ENCODE measurements at regions of chr13 and their contacts with region 1.

Region 1: DNA sequence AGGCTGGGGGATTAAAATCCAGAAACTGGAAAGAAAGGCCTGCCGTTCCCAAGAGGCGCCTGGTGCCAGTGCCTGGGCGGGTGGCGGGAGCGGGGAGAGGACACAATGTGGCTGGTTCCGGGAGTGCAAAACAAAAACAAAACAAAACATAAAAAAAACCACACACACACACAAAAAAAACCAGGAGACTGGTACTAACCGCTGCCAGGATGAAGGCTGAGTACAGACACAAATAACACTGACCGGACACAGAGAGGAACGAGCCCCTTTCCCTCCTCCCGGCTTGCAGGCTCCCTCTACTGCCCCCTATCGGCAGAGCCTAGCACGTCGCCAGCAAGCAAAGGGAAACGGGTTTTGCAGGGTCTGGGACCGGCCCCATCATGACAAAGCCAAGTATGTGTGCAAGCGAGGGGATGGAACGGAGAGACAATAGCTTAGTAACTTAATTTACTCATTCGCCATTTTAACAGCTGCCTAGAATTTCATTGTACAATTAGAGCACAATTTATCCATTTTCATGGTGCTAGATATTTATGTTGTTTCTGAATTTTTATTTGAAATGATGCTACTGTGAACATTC is 17.9 kb upstream of the ZDHHC20 start:
- DNase-seq: peak; percentile 55 to 87 (median 80)
- ATAC-seq: peak; percentile 87
- H3K4me3 ChIP-seq: peak overlapping the region; percentile 24 to 40
- H3K4me3 Mint-ChIP-seq: peak overlapping the region; percentile 81
- H3K27ac ChIP-seq: no peak overlapping the region
- H3K27ac Mint-ChIP-seq: no peak overlapping the region
- H3K4me1 ChIP-seq: peaks cover 11% of the 10 kb centered on the region
- H3K4me1 Mint-ChIP-seq: peaks cover 19% of the 10 kb centered on the region
- H3K27me3 ChIP-seq: no peaks in the 10 kb centered on the region
- H3K27me3 Mint-ChIP-seq: peaks cover 2% of the 10 kb centered on the region
- CTCF ChIP-seq: peak; percentile 96

Region 2: GRCh38 chr13:20940083-20940880 is 536.7 kb before region 1 on chr13:
- CTCF ChIA-PET with region 1: interaction called, 9 read pairs
- POLR2A ChIA-PET with region 1: no interaction called
- intact Hi-C with region 1: loop called in 1 of 2 experiments (anchors 1 kb)
- DNase-seq: no peak
- ATAC-seq: no peak
- H3K4me3 ChIP-seq: no peak overlapping the region
- H3K4me3 Mint-ChIP-seq: no peak overlapping the region
- H3K27ac ChIP-seq: no peak overlapping the region
- H3K27ac Mint-ChIP-seq: no peak overlapping the region
- H3K4me1 ChIP-seq: no peaks in the 10 kb centered on the region
- H3K4me1 Mint-ChIP-seq: no peaks in the 10 kb centered on the region
- H3K27me3 ChIP-seq: peaks cover 0 to 4% of the 10 kb centered on the region in 2 experiments
- H3K27me3 Mint-ChIP-seq: peaks cover 22% of the 10 kb centered on the region
- CTCF ChIP-seq: no peak

Region 3: DNA sequence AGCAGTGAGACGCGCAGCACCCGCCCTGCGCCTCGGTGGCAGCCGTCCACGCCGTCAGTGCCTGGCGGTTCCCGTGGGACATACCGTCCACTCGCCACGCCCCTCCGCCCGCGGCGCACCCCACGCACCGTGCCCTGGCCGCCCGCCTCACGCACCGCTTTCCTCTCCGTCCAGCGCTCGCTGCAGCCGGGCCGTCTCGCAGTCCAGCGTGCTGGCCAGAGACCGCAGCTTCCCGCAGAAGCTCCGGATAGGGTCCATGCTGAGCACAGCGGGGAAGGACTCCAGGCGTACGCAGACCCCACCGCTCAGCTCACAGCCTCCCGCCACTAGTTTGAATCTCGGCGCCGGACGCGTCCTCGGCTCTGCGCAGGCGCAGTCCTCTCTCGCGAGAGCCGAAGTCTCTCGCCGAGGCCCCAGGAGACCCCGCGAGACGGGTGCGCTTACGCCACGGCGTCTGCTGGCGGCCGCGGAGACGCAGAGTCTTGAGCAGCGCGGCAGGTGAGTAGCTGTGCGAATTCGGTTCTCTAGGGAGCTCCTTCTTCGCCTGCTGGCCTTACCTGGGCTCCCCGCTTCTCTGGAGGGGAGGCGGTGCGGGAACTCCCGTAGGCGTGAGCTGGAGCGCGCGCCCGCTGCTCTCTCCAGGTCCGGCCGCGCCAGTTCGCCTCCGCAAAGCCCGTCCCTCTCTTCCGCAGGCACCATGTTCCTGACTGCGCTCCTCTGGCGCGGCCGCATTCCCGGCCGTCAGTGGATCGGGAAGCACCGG is 300.6 kb before region 1 on chr13 and contains the starts of genes MRPL57 and SKA3:
- CTCF ChIA-PET with region 1: interaction called, 15 read pairs
- POLR2A ChIA-PET with region 1: no interaction called
- intact Hi-C with region 1: loop called (anchors 5 kb)
- DNase-seq: peak; percentile 86 to 97 (median 93)
- ATAC-seq: peak; percentile 97
- H3K4me3 ChIP-seq: peak within 1 kb of the TSS; percentile 83 to 93
- H3K4me3 Mint-ChIP-seq: peak within 1 kb of the TSS; percentile 97
- H3K27ac ChIP-seq: peak within 1 kb of the TSS; percentile 80 to 92
- H3K27ac Mint-ChIP-seq: peak within 1 kb of the TSS; percentile 96
- H3K4me1 ChIP-seq: peaks cover 18% of the 10 kb centered on the region
- H3K4me1 Mint-ChIP-seq: peaks cover 26% of the 10 kb centered on the region
- H3K27me3 ChIP-seq: no peaks in the 10 kb centered on the region
- H3K27me3 Mint-ChIP-seq: no peaks in the 10 kb centered on the region
- CTCF ChIP-seq: no peak
- total RNA-seq, gene MRPL57: 9.8 to 11.1 TPM
- total RNA-seq, gene SKA3: 0.36 to 0.49 TPM

Region 4: GRCh38 chr13:21458813-21459701 is 17.9 kb before region 1 on chr13 and contains the start of gene ZDHHC20:
- CTCF ChIA-PET with region 1: interaction called, 10 read pairs
- POLR2A ChIA-PET with region 1: no interaction called
- intact Hi-C with region 1: loop called (anchors 2 kb)
- DNase-seq: peak; percentile 77 to 96 (median 90)
- ATAC-seq: peak; percentile 93
- H3K4me3 ChIP-seq: peak within 1 kb of the TSS; percentile 69 to 78
- H3K4me3 Mint-ChIP-seq: peak within 1 kb of the TSS; percentile 95
- H3K27ac ChIP-seq: peak within 1 kb of the TSS; percentile 80 to 89
- H3K27ac Mint-ChIP-seq: peak within 1 kb of the TSS; percentile 96
- H3K4me1 ChIP-seq: peaks cover 15% of the 10 kb centered on the region
- H3K4me1 Mint-ChIP-seq: peaks cover 45% of the 10 kb centered on the region
- H3K27me3 ChIP-seq: no peaks in the 10 kb centered on the region
- H3K27me3 Mint-ChIP-seq: no peaks in the 10 kb centered on the region
- CTCF ChIP-seq: no peak
- total RNA-seq, gene ZDHHC20: 81.0 to 81.1 TPM

Region 5: DNA sequence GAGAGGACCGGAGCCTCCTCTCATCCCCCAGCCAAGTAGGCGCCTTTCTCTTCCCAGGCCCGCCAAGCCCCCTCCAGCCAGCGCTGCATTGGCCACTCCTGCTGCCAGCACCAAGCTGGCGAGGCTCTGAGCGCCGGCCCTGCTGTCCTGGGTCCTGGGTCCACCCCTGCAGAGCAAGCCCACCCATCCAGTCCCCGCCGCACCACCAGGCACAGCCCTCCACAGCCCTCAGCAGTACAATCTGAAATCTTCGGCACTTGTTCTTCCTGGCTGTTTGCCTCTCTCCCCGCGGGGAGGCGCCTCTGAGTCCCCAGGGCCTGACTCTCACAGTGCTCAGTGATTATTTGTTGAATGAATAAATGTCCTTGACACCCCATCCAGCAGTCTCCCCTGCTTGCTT is 1467.4 kb after region 1 on chr13:
- CTCF ChIA-PET with region 1: no interaction called
- POLR2A ChIA-PET with region 1: no interaction called
- intact Hi-C with region 1: no loop called
- DNase-seq: no peak
- ATAC-seq: no peak
- H3K4me3 ChIP-seq: no peak overlapping the region
- H3K4me3 Mint-ChIP-seq: no peak overlapping the region
- H3K27ac ChIP-seq: no peak overlapping the region
- H3K27ac Mint-ChIP-seq: no peak overlapping the region
- H3K4me1 ChIP-seq: no peaks in the 10 kb centered on the region
- H3K4me1 Mint-ChIP-seq: no peaks in the 10 kb centered on the region
- H3K27me3 ChIP-seq: no peaks in the 10 kb centered on the region
- H3K27me3 Mint-ChIP-seq: peaks cover 2% of the 10 kb centered on the region
- CTCF ChIP-seq: no peak

Measured in CD8-positive, alpha-beta T cell (primary cell).